ENCODE measurements at regions of chr3 and their contacts with region 1.

Region 1: DNA sequence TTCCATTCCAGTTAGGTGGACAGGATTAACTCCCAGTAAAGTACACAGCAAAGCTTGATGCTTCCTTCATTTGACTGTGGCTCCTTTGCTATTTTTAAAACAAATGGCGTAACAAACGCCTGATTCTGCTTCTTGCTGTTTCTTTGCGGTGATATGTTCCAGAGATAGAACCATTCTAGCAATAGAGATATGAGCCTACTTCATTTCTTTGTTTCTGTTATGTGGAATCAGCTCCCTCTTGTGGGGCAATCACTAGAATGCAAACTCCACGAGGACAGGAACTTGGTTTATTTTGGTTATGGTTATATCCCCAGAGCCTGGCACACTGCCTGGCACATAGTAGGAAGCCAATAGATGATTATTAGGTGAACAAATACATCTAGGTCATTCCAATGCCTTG is 122.6 kb upstream of the SLC6A11 start:
- DNase-seq: no peak
- H3K4me3 Mint-ChIP-seq: no peak overlapping the region
- H3K27ac Mint-ChIP-seq: no peak overlapping the region
- H3K4me1 Mint-ChIP-seq: no peaks in the 10 kb centered on the region
- H3K27me3 Mint-ChIP-seq: peaks cover 87% of the 10 kb centered on the region
- CTCF ChIP-seq: no peak

Region 2: GRCh38 chr3:11045536-11045935 is 352.1 kb after region 1 on chr3:
- CTCF ChIA-PET with region 1: no interaction called
- intact Hi-C with region 1: loop called (anchors 5 kb)
- DNase-seq: no peak
- H3K4me3 Mint-ChIP-seq: no peak overlapping the region
- H3K27ac Mint-ChIP-seq: no peak overlapping the region
- H3K4me1 Mint-ChIP-seq: no peaks in the 10 kb centered on the region
- H3K27me3 Mint-ChIP-seq: peaks cover 52% of the 10 kb centered on the region
- CTCF ChIP-seq: no peak